Activated CD4-positive, alpha-beta memory T cell treated with anti-CD3 and anti-CD28 coated beads for 36 hours (primary cell): ENCODE measurements at regions of chr7 and their contacts with region 1.

Region 1: GRCh38 chr7:76166404-76167255 is 35.1 kb upstream of the SRRM3 start:
- DNase-seq: peak; percentile 95
- H3K4me3 Mint-ChIP-seq: peak overlapping the region; percentile 82
- H3K27ac Mint-ChIP-seq: peak overlapping the region; percentile 73
- H3K4me1 Mint-ChIP-seq: peaks cover 6% of the 10 kb centered on the region
- H3K27me3 Mint-ChIP-seq: no peaks in the 10 kb centered on the region

Region 2: DNA sequence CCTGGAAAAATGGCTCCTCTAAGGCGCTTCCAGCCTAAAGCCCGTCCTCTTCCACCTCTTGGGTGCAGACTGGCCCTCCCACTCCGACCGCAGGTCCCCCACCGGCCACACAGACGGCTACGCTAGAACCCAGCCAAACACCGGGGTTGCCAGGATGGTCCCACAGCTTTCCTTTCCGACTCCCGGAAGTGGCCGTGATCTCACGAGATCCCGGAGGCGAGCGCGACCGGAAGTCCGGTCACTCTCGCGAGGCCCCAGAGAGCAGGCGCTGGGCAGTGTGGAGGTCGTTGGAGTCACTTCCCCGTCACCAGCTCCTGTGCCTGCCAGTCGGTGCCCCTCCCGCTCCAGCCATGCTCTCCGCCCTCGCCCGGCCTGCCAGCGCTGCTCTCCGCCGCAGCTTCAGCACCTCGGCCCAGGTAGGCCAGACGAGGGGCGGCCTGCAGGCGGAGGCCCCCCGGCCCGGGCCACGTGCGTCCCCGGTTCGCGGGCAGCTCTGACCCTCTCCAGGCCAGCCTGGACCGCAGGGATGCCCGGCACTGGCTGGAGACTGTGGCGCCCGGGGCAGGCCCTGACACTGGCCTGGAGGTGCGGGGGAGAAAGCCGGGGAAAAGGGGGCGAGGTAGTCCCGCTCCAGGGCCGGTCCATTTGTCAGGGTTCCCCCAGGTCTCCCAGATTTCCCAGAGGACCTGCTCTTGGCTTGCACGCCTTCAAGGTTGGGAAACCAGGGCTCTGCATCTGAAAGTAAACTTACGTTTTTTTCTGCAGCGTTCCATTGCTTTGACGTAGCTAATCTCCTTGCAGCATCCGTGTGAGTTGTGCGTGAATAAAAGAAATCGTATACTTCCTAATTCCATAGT is 118.6 kb before region 1 on chr7 and contains the starts of genes MDH2 and STYXL1:
- CTCF ChIA-PET with region 1: interaction called, 3 read pairs
- POLR2A ChIA-PET with region 1: interaction called, 4 read pairs
- intact Hi-C with region 1: loop called (anchors 5 kb)
- DNase-seq: peak; percentile 96
- H3K4me3 Mint-ChIP-seq: peak within 1 kb of the TSS; percentile 92
- H3K27ac Mint-ChIP-seq: peak within 1 kb of the TSS; percentile 90
- H3K4me1 Mint-ChIP-seq: peaks cover 42% of the 10 kb centered on the region
- H3K27me3 Mint-ChIP-seq: no peaks in the 10 kb centered on the region
- total RNA-seq, gene MDH2: 259 to 271 TPM
- total RNA-seq, gene STYXL1: 37.8 to 40.5 TPM